A673 (cell line): ENCODE measurements at regions of chr19 and their contacts with region 1.

Region 1: DNA sequence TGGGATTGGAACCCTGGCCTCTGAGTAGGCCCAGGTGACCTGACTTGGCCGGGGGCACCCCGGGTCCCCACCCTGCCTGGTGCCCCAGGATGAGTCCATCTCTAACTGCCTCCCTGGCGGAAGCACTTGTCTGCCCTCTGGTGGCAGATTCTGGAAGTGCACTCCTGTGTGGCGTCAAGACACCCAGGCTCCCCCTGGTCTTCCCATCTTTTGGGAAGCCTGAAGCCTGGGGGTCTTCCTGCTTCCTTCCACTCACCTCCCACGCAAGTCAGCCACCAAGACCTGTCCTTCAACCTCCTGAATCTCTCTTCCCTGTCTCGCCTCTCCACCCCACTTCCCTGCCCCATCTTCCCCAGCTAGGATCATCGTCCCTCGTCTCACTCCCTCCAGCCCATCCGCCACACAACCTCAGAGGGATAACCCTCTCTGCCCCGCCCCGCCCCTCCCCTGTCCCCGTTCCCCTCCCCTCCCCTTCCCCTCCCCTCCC is 7.4 kb downstream of the RABAC1 start:
- DNase-seq: peak; percentile 86
- H3K4me3 ChIP-seq: no peak overlapping the region
- H3K27ac ChIP-seq: no peak overlapping the region
- H3K4me1 ChIP-seq: no peaks in the 10 kb centered on the region
- H3K27me3 ChIP-seq: no peaks in the 10 kb centered on the region
- CTCF ChIP-seq: peak; percentile 98

Region 2: GRCh38 chr19:41775360-41775695 is 176.4 kb before region 1 on chr19:
- CTCF ChIA-PET with region 1: no interaction called
- POLR2A ChIA-PET with region 1: no interaction called
- intact Hi-C with region 1: no loop called
- DNase-seq: no peak
- H3K4me3 ChIP-seq: no peak overlapping the region
- H3K27ac ChIP-seq: no peak overlapping the region
- H3K4me1 ChIP-seq: no peaks in the 10 kb centered on the region
- H3K27me3 ChIP-seq: no peaks in the 10 kb centered on the region
- CTCF ChIP-seq: no peak

Region 3: DNA sequence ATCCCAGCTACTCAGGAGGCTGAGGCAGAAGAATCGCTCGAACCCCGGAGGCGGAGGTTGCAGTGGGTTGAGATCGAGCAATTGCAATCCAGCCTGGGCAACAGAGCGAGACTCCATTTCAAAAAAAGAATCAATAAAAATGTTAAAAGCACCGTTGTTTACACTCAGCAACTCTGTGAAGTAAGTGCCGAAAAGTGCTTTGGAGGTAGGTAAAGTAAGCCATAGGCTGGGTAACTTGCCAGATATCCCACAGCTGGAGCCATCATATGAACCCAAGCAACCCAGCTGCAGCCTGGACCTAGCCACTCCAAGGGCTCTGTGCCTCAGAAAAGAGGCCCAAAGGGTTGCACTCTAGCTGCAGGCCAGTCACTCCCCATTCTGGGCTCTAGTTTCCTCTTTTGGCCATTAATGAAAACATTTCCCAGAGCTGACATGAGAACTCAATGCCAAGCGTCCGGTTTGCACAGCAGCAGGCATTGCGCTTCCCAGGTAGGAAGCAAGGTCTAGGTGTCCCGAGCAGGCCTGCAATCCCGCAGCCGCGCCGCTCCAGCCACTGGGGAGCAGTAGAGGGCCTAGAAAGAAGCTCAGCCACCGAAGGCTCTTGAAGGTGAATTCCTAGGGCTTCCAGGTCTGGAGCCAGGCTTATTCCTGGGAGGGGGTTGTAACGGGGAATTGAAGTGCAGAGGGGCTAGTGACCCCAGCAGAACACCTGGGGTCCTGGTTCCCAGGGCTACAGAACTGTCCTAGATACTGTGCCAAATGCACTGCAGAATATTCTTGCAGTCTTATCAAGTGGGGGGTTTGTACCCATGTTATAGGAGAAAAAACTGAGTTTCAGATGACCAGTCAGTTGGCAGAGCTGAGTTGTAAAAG is 78.7 kb before region 1 on chr19:
- CTCF ChIA-PET with region 1: interaction called, 7 read pairs
- POLR2A ChIA-PET with region 1: no interaction called
- intact Hi-C with region 1: loop called (anchors 1 kb)
- DNase-seq: peak; percentile 81
- H3K4me3 ChIP-seq: no peak overlapping the region
- H3K27ac ChIP-seq: peak overlapping the region; percentile 56
- H3K4me1 ChIP-seq: peaks cover 27% of the 10 kb centered on the region
- H3K27me3 ChIP-seq: no peaks in the 10 kb centered on the region
- CTCF ChIP-seq: peak; percentile 86

Region 4: GRCh38 chr19:41934849-41935374 is 16.8 kb before region 1 on chr19:
- CTCF ChIA-PET with region 1: interaction called, 4 read pairs
- POLR2A ChIA-PET with region 1: no interaction called
- intact Hi-C with region 1: loop called (anchors 1 kb)
- DNase-seq: peak; percentile 79
- H3K4me3 ChIP-seq: no peak overlapping the region
- H3K27ac ChIP-seq: no peak overlapping the region
- H3K4me1 ChIP-seq: peaks cover 66% of the 10 kb centered on the region
- H3K27me3 ChIP-seq: no peaks in the 10 kb centered on the region
- CTCF ChIP-seq: peak; percentile 96